Right ventricle myocardium inferior (tissue), 1 donor: ENCODE measurements at regions of chr5 and their contacts with region 1.

Region 1: DNA sequence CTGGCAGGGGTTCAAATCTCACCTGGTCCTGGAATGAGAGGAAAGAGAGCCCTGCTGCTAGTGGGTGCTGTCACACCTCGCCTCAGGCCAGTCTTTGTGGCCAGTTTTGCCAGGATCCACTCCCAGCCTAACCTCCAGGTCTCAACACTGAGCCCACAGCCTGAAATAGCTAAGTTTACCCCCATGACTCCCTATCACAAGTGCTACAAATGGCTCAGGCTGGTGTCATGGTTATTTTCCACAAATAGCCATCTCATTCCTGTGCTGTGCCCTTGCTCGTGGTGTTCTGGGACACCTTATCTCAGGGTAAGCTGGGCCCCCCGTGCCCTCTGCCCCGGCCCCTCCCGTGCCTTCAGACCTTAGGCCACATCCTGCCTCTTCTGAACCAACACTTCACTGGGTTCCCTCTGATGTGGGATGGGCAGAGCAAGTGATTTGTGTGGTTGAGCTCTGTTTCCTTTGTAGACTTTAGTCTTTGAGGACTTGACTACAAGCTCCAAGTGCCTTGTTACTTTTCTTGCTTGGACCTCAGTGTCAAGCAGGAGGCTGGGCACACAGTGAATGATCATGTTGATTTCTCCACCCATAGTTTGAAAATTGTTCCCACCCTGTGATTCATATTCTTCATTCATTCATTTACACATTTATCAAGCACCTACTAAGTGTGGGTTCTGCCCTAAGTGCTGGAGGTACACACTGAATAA is 84.7 kb upstream of the CTNNA1 start:
- DNase-seq: peak; percentile 80
- ATAC-seq: peak; percentile 96

Region 2: DNA sequence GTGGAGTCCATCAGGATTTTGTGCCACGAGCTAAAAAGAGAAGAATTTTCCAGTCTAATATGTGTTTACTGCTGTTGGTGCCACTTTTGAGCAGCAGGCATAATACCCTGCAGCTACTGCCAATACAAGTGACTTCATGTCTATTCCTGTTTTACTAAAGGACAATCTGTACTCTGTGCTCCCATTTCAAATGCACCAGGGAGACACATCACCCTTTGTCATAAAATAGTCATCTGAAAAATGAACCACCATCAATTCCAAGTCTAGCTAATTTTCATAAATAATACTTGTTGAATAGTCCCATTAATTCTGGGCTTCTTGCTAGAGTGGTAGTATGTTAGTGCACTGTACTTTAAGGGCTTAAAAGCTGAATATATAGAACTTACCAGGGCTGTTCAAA is 788.2 kb before region 1 on chr5:
- intact Hi-C with region 1: no loop called
- DNase-seq: no peak
- ATAC-seq: peak; percentile 80

Region 3: DNA sequence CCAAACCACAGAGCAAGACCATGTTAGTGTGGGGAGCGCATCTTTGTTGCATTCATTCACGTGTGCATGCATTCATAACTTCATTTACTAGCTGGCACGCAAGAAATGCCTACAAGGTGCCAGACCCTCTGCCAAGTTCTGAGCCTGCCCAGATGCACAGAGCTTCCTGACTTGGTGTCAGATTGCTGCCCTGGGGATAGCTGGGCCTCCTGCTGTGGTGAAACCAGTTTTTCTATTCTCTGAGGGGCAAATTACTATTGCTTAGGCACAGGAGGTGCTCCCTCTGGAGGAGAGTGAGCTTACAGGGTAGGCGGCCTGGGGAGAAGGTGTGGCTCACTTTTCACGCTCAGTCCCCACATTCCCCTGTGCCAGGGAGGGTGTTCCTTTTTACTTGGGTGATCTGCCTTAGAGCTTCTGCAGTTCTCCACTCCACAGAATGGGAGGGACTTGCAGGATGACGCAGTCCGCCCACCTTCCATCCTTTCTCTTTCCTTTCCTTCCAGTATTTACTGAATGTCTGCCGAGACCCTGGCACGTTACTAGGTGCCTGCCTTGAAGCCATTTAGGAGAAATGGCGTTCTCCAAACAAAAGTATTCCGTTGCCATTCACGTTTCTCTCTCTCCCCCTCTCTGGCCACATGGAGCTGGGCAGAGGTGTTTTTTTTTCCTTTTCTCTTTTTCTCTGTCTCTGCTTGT is 56.8 kb after region 1 on chr5:
- intact Hi-C with region 1: loop called (anchors 2 kb)
- DNase-seq: no peak
- ATAC-seq: peak; percentile 68